PC-9 (cell line): ENCODE measurements at regions of chr1 and their contacts with region 1.

Region 1: GRCh38 chr1:156892190-156893047 is 1.1 kb upstream of the PEAR1 start:
- DNase-seq: peak; percentile 75 to 91
- H3K4me3 ChIP-seq: peak overlapping the region; percentile 24; the same call in 1 of the 2 replicates
- H3K27ac ChIP-seq: no peak overlapping the region
- H3K4me1 ChIP-seq: peaks cover 23% of the 10 kb centered on the region
- H3K27me3 ChIP-seq: peaks cover 8% of the 10 kb centered on the region
- CTCF ChIP-seq: peak; percentile 87

Region 2: GRCh38 chr1:156797212-156797871 is 95.1 kb before region 1 on chr1:
- CTCF ChIA-PET with region 1: no interaction called
- POLR2A ChIA-PET with region 1: no interaction called
- intact Hi-C with region 1: loop called (anchors 1 kb)
- DNase-seq: peak; percentile 41 to 54
- H3K4me3 ChIP-seq: no peak overlapping the region
- H3K27ac ChIP-seq: no peak overlapping the region
- H3K4me1 ChIP-seq: no peaks in the 10 kb centered on the region
- H3K27me3 ChIP-seq: no peaks in the 10 kb centered on the region
- CTCF ChIP-seq: peak; percentile 90

Region 3: GRCh38 chr1:156927215-156928042 is 35.0 kb after region 1 on chr1:
- CTCF ChIA-PET with region 1: interaction called, 4 read pairs
- POLR2A ChIA-PET with region 1: no interaction called
- intact Hi-C with region 1: loop called (anchors 1 kb)
- DNase-seq: peak; percentile 68 to 79
- H3K4me3 ChIP-seq: peak overlapping the region; percentile 64
- H3K27ac ChIP-seq: no peak overlapping the region
- H3K4me1 ChIP-seq: peaks cover 30% of the 10 kb centered on the region
- H3K27me3 ChIP-seq: no peaks in the 10 kb centered on the region
- CTCF ChIP-seq: peak; percentile 77

Region 4: GRCh38 chr1:157073944-157074767 is 181.7 kb after region 1 on chr1:
- CTCF ChIA-PET with region 1: no interaction called
- POLR2A ChIA-PET with region 1: no interaction called
- intact Hi-C with region 1: loop called (anchors 10 kb)
- DNase-seq: peak in 1 of 2 experiments; percentile 54
- H3K4me3 ChIP-seq: no peak overlapping the region
- H3K27ac ChIP-seq: no peak overlapping the region
- H3K4me1 ChIP-seq: no peaks in the 10 kb centered on the region
- H3K27me3 ChIP-seq: peaks cover 3% of the 10 kb centered on the region; the same call in 1 of the 2 replicates
- CTCF ChIP-seq: peak; percentile 57